Right lobe of liver (tissue), 6 donors: ENCODE measurements at regions of chr16 and their contacts with region 1.

Region 1: DNA sequence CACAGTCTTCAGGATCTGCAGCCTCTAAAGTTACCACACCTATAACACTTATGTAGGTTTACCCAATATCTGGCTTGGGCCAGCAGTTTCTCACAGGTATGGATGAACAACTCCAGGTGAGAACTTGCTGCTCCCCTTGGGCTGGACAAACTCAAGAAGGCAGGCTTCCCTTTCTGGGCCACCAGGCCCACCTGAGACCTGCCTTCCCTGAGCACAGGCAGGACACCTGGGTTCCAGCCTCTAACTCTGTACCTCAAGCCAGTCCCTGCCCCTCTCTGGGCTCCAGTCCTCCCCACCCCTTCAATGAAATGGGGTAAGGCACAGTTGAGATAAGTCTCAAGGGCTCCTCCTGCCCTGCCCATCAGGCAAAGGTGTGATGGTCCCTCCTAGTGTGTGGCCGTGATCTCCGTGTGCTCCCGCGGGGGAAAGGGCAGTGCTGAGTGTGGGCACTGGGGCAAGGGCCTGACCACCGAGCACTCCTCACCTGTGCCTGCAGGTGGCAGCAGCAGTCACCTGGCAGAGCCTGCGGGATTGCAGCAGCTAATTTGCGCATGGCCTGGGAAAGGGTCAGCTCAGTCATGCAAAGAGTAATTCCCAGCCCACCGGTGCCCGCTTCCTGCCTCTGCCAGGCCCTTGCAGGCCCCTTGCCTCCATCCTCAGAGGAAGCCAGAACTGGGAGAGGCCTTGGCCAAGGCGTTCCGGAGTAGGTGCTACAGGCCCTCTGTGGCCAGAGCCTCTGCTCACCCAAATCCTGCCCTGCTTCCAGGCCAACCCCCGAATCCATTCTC is 28.2 kb upstream of the ADGRG1 start:
- DNase-seq: peak; percentile 61 to 71 (median 70)
- ATAC-seq: peak; percentile 94 to 95 (median 95)
- H3K4me3 ChIP-seq: no peak overlapping the region
- H3K27ac ChIP-seq: no peak overlapping the region
- H3K4me1 ChIP-seq: no peaks in the 10 kb centered on the region
- H3K27me3 ChIP-seq: no peaks in the 10 kb centered on the region
- CTCF ChIP-seq: peak; percentile 71 to 83 (median 80)
- POLR2A ChIP-seq: no peak

Region 2: GRCh38 chr16:57277586-57277985 is 322.7 kb before region 1 on chr16:
- intact Hi-C with region 1: no loop called
- DNase-seq: no peak
- ATAC-seq: no peak
- H3K4me3 ChIP-seq: no peak overlapping the region
- H3K27ac ChIP-seq: no peak overlapping the region
- H3K4me1 ChIP-seq: peaks cover 0 to 10% (median 4%) of the 10 kb centered on the region in 4 donors
- H3K27me3 ChIP-seq: no peaks in the 10 kb centered on the region
- CTCF ChIP-seq: no peak
- POLR2A ChIP-seq: no peak

Region 3: DNA sequence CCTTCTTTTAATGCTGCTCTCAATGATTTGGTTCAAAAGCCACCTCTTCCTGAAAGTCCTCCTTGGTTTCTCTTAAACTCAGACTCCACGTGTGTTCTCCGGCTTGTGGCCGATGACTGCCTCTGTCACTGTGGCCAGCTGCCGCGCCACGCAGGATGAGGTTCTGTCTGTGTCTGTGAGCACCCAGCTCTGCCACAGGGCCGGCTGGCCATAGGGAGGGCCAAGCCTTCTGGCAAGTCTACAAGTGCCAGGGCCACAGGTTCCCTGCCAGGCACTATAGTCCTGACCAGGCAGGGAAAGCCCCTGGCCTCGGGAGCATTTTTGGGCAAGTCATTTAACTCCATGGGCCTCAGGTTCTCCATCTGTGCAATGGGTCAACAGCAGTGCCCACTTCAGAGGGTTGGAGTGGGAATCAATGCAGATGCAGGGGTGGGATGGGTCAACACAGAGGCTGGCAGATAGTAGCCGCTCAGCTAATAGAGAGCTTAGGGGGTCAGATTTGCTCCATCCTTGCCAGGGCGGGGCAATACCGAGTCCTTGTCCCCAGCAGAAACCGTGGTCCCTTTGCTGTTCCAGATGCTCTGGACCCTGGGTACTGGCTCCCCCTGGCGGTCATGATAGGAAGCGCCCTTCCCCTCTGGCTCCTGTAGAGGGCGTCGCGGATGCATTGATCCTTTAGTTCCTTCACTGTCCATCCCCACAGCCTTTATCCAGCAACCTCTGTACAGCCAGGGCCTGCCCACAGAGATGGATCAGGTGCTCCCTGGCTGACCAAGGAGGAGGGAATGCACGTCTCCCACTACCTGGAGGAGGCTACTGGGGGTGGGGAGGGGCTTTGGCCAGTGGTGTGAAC is 48.6 kb after region 1 on chr16:
- intact Hi-C with region 1: no loop called
- DNase-seq: peak; percentile 75 to 84 (median 83)
- ATAC-seq: peak; percentile 87 to 96 (median 92)
- H3K4me3 ChIP-seq: no peak overlapping the region
- H3K27ac ChIP-seq: peak overlapping the region in 1 of 3 donors; percentile 5
- H3K4me1 ChIP-seq: no peaks in the 10 kb centered on the region
- H3K27me3 ChIP-seq: no peaks in the 10 kb centered on the region
- CTCF ChIP-seq: peak; percentile 100
- POLR2A ChIP-seq: no peak

Region 4: GRCh38 chr16:57720142-57720575 is 119.9 kb after region 1 on chr16:
- intact Hi-C with region 1: loop called in 1 of 2 experiments (anchors 5 kb)
- DNase-seq: peak; percentile 84 to 86 (median 85)
- ATAC-seq: peak; percentile 98 to 99 (median 98)
- H3K4me3 ChIP-seq: no peak overlapping the region
- H3K27ac ChIP-seq: no peak overlapping the region
- H3K4me1 ChIP-seq: no peaks in the 10 kb centered on the region
- H3K27me3 ChIP-seq: no peaks in the 10 kb centered on the region
- CTCF ChIP-seq: peak; percentile 79 to 91 (median 87)
- POLR2A ChIP-seq: no peak

Region 5: DNA sequence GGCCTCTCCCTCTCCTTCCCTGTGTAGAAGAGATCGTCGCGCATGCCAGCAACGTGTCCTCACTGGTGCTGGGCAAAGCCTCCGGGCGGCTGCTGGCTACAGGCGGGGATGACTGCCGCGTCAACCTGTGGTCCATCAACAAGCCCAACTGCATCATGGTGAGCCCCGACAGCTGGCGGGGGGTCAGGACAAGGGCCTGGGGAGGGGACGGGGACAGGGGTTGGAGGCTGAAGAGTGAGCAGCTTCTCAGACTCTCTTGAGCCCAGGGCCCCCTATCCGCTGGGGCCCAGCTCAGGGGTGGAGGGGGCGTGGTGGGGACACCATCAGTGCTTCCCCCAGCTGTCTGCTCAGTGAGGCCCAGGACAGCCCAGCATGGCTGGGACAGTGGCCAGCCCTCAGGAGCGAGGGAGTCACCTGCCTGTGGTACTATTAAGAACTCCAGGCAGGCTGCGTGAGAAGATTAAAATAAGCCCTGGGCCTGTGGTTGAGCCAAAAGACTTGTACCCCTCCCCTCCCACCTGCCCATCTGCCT is 141.5 kb after region 1 on chr16:
- intact Hi-C with region 1: no loop called
- DNase-seq: peak in 1 of 3 donors; percentile 43
- ATAC-seq: peak in 1 of 4 donors; percentile 12
- H3K4me3 ChIP-seq: no peak overlapping the region
- H3K27ac ChIP-seq: no peak overlapping the region
- H3K4me1 ChIP-seq: peaks cover 0 to 5% (median 2%) of the 10 kb centered on the region in 4 donors
- H3K27me3 ChIP-seq: no peaks in the 10 kb centered on the region
- CTCF ChIP-seq: no peak
- POLR2A ChIP-seq: no peak